ENCODE measurements at regions of chr12 and their contacts with region 1.

Region 1: GRCh38 chr12:115752913-115753726 is 524.4 kb downstream of the MED13L start:
- DNase-seq: peak in 35 of 42 donors; percentile 6 to 79 (median 50)

Region 2: GRCh38 chr12:114662512-114663177 is 1090.5 kb before region 1 on chr12:
- intact Hi-C with region 1: loop called (anchors 2 kb)
- DNase-seq: peak; percentile 64 to 94 (median 84)

Region 3: GRCh38 chr12:115149685-115150378 is 603.3 kb before region 1 on chr12:
- intact Hi-C with region 1: loop called (anchors 10 kb)
- DNase-seq: no peak

Region 4: DNA sequence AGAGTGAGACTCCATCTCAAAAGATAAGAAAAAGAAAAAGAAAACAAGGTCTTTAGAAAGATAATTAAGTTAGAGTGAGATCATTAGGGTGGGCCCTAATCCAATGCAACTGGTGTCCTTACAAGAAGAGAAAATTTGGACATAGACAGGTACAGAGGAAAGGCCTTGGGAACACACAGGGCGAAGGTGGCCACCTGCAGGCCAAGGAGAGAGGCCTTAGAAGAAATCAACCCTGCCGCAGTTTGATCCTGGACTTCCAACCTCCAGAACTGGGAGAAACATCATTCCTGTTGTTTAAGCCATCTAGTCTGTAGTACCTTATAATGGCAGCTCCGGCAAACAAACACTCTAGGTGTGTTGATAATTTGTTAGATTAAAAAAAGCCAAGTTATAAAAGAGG is 32.4 kb after region 1 on chr12:
- intact Hi-C with region 1: no loop called
- DNase-seq: no peak

Region 5: GRCh38 chr12:115823635-115824034 is 70.5 kb after region 1 on chr12:
- intact Hi-C with region 1: no loop called
- DNase-seq: no peak

Region 6: GRCh38 chr12:115946867-115947696 is 194.0 kb after region 1 on chr12:
- intact Hi-C with region 1: no loop called
- DNase-seq: no peak

Region 7: GRCh38 chr12:116037941-116038837 is 285.1 kb after region 1 on chr12:
- intact Hi-C with region 1: no loop called
- DNase-seq: no peak